Activated CD4-positive, alpha-beta T cell treated with anti-CD3 and anti-CD28 coated beads, Interleukin-2, amount 10 ng/mL, durations not matched to agents 24 days and 14 days (primary cell): ENCODE measurements at regions of chr2 and their contacts with region 1.

Region 1: GRCh38 chr2:217886720-217887309 is 116.0 kb downstream of the TNS1 start:
- DNase-seq: peak; percentile 88
- H3K4me3 Mint-ChIP-seq: no peak overlapping the region
- H3K27ac Mint-ChIP-seq: no peak overlapping the region
- H3K4me1 Mint-ChIP-seq: peaks cover 2% of the 10 kb centered on the region
- H3K27me3 Mint-ChIP-seq: no peaks in the 10 kb centered on the region

Region 2: GRCh38 chr2:217864963-217865772 is 21.6 kb before region 1 on chr2:
- intact Hi-C with region 1: no loop called
- DNase-seq: no peak
- H3K4me3 Mint-ChIP-seq: no peak overlapping the region
- H3K27ac Mint-ChIP-seq: no peak overlapping the region
- H3K4me1 Mint-ChIP-seq: no peaks in the 10 kb centered on the region
- H3K27me3 Mint-ChIP-seq: no peaks in the 10 kb centered on the region

Region 3: DNA sequence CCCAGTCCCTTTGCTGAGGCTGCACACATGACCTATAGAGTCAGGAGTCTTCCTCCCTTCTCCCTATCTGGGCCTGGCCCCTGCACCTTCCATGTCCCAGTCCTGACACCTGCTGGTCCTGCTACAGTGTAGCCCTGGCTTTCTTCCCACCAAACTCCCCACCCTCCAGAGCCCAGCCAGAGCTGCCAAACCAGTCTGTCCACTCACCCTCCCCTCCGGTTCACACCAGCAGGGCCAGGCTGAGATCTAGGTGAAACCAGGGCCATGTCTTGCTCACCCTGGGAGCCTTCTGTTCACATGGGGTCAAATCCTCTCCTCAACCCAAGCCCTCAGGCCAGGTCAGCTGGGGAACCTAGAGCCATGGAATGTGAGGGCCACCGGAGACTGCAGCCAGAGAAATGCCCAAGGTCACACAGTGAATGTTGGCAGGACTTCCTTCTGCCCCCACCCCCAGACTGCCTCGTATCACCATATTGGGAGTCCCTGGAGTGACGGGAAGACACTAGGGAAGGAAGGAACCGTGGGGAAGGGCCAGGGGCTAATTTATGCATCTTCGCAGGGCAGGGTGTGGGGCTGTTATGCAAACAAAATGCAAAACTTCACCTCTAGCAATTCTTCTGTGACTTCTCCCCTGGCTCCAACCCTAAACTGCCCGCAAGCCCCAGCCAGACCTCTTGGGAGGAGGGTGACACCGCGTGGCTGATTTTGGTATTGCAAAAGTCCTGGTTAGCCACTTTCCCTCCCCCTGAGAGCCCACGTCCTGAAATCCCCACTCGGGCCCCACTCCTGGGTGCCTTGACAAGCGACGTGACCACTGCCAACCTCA is 101.4 kb after region 1 on chr2:
- intact Hi-C with region 1: loop called (anchors 5 kb)
- DNase-seq: peak; percentile 92
- H3K4me3 Mint-ChIP-seq: no peak overlapping the region
- H3K27ac Mint-ChIP-seq: no peak overlapping the region
- H3K4me1 Mint-ChIP-seq: peaks cover 8% of the 10 kb centered on the region
- H3K27me3 Mint-ChIP-seq: peaks cover 2% of the 10 kb centered on the region